ENCODE measurements at regions of chr10 and their contacts with region 1.

Region 1: GRCh38 chr10:90075995-90076394 is 374.6 kb downstream of the KIF20B start:
- DNase-seq: no peak
- H3K4me3 ChIP-seq: no peak overlapping the region
- H3K27ac ChIP-seq: no peak overlapping the region
- H3K27me3 ChIP-seq: no peaks in the 10 kb centered on the region
- CTCF ChIP-seq: no peak

Region 2: GRCh38 chr10:90111671-90112070 is 35.7 kb after region 1 on chr10:
- CTCF ChIA-PET with region 1: no interaction called
- POLR2A ChIA-PET with region 1: no interaction called
- DNase-seq: no peak
- H3K4me3 ChIP-seq: no peak overlapping the region
- H3K27ac ChIP-seq: no peak overlapping the region
- H3K27me3 ChIP-seq: no peaks in the 10 kb centered on the region
- CTCF ChIP-seq: no peak

Region 3: GRCh38 chr10:90138844-90139243 is 62.8 kb after region 1 on chr10:
- CTCF ChIA-PET with region 1: no interaction called
- POLR2A ChIA-PET with region 1: no interaction called
- DNase-seq: no peak
- H3K4me3 ChIP-seq: no peak overlapping the region
- H3K27ac ChIP-seq: no peak overlapping the region
- H3K27me3 ChIP-seq: no peaks in the 10 kb centered on the region
- CTCF ChIP-seq: peak; percentile 22; the same call in 1 of the 2 replicates

Region 4: GRCh38 chr10:90798482-90798881 is 722.5 kb after region 1 on chr10:
- CTCF ChIA-PET with region 1: no interaction called
- POLR2A ChIA-PET with region 1: no interaction called
- DNase-seq: no peak
- H3K4me3 ChIP-seq: no peak overlapping the region
- H3K27ac ChIP-seq: no peak overlapping the region
- H3K27me3 ChIP-seq: no peaks in the 10 kb centered on the region
- CTCF ChIP-seq: no peak

Region 5: DNA sequence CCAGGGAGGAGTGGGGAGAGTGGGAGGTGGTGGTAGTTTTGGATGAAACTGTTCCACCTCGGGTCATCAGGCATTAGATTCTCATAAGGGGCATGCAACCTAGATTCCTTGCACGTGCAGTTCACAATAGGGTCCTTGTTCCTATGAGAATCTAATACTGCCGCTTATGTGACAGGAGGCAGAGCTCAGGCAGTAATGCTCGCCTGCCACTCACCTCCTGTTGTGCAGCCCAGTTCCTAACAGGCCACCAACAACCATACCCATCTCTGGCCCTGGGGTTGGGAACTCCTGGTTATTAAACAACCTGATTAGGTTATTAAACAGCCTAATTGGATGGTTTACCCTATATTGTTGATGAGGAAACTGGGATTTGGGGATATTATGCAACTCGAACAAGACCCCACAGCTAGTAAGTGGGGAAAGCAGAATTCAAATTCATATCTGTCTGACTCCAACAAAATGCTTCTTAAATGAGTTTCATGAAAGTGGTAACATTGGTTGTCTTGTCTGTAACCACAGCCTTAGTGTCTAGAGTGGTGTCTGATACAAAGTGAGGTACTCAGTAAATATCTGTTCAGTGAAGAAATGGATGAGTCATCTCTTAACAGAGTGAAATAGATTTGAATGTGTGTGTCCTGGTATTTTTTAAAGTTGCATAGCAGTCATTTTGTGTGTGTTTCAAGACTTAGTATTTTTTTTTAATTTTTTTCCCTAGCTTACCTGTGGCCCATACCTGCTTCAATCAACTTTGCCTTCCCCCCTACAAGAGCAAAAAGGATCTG is 1435.7 kb after region 1 on chr10:
- CTCF ChIA-PET with region 1: interaction called, 13 read pairs
- POLR2A ChIA-PET with region 1: no interaction called
- DNase-seq: peak; percentile 38
- H3K4me3 ChIP-seq: no peak overlapping the region
- H3K27ac ChIP-seq: no peak overlapping the region
- H3K27me3 ChIP-seq: no peaks in the 10 kb centered on the region
- CTCF ChIP-seq: no peak

Measured in AG04450 (cell line).